HepG2 (cell line): ENCODE measurements at regions of chr16 and their contacts with region 1.

Region 1: GRCh38 chr16:70725912-70726828 is 40.3 kb upstream of the MTSS2 start:
- DNase-seq: no peak
- ATAC-seq: no peak
- H3K4me3 ChIP-seq: peak overlapping the region; percentile 27 to 73 (median 52); a peak in 5 of 6 replicates
- H3K27ac ChIP-seq: peak overlapping the region; percentile 99
- H3K4me1 ChIP-seq: peaks cover 45% of the 10 kb centered on the region
- H3K27me3 ChIP-seq: no peaks in the 10 kb centered on the region
- CTCF ChIP-seq: no peak
- EP300 ChIP-seq: no peak
- POLR2A ChIP-seq: 0 out of 4 replicates have a peak, but pooled peaks of 1 of the 2 experiments have one; percentile 5
- RAD21 ChIP-seq: no peak

Region 2: GRCh38 chr16:70594576-70594975 is 131.6 kb before region 1 on chr16:
- CTCF ChIA-PET with region 1: no interaction called
- POLR2A ChIA-PET with region 1: no interaction called
- in situ Hi-C with region 1: no loop called
- intact Hi-C with region 1: no loop called
- DNase-seq: no peak
- ATAC-seq: no peak
- H3K4me3 ChIP-seq: no peak overlapping the region
- H3K27ac ChIP-seq: no peak overlapping the region
- H3K4me1 ChIP-seq: peaks cover 28% of the 10 kb centered on the region
- H3K27me3 ChIP-seq: peaks cover 0 to 2% of the 10 kb centered on the region in 2 experiments; a peak in 2 of 5 replicates
- CTCF ChIP-seq: no peak
- EP300 ChIP-seq: no peak
- POLR2A ChIP-seq: no peak
- RAD21 ChIP-seq: no peak

Region 3: DNA sequence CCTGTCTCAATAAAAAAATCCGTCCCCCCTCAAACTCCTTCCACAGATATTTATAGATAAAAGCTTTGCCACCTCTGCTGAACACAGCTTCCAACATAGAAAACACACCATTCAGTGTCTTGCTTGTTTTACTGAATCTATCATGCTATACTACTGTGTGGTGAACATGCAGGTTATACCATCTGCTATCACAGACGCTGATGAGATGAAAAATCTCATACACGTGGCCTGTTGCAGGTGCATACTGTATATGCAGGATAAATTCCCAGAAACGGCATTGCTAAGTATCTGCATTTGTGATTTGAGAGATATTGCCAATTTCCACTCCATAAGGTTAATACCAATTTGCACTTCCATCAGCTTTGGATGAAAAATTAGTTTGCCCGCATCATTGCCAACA is 110.2 kb before region 1 on chr16:
- CTCF ChIA-PET with region 1: no interaction called
- POLR2A ChIA-PET with region 1: no interaction called
- in situ Hi-C with region 1: no loop called
- intact Hi-C with region 1: no loop called
- DNase-seq: no peak
- ATAC-seq: no peak
- H3K4me3 ChIP-seq: no peak overlapping the region
- H3K27ac ChIP-seq: no peak overlapping the region
- H3K4me1 ChIP-seq: peaks cover 2% of the 10 kb centered on the region; the same call in 1 of the 2 replicates
- H3K27me3 ChIP-seq: peaks cover 0 to 14% of the 10 kb centered on the region in 2 experiments; a peak in 2 of 5 replicates
- CTCF ChIP-seq: no peak
- EP300 ChIP-seq: no peak
- POLR2A ChIP-seq: no peak
- RAD21 ChIP-seq: no peak

Region 4: DNA sequence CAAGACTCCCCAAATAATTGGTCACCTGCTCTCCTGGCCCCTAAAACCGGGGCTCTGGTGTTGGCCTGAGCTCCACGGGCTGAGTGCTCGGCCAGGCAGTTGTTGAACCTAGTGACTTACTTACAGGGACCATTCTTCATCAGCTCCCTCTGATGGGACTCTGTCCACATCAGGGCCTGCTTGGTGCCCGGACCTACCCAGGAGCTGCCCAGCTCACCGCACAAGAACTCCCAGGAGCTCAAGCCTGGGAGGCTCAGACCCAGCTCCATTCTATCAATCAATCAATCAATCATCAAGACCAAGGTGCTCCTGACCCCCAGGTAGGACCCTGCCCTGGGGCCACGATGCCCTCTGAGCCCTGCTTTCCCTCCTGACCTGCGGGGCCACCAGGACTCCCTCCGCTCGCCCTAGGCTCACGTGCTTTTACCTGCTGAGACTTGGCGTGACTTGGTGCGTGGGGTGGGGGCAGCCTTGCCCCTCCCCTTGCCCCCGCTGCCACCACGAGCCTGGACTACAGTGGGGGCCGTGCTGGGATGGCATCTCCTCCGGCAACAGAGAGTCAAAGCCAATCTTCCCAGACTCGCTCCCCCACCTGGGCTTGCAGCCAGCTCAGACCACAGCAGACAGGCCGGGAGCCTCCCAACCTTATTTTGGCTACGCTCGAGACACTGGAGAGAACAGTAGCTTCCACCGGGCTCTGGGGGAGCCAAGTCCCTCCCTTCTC is 64.1 kb before region 1 on chr16:
- CTCF ChIA-PET with region 1: no interaction called
- POLR2A ChIA-PET with region 1: interaction called, 15 read pairs
- in situ Hi-C with region 1: no loop called
- intact Hi-C with region 1: no loop called
- DNase-seq: no peak
- ATAC-seq: peak; percentile 1; the same call in 1 of the 3 replicates
- H3K4me3 ChIP-seq: no peak overlapping the region
- H3K27ac ChIP-seq: peak overlapping the region; percentile 19
- H3K4me1 ChIP-seq: peaks cover 20% of the 10 kb centered on the region
- H3K27me3 ChIP-seq: 0 out of 5 replicates have a peak, but pooled peaks cover 0 to under 1% of the 10 kb centered on the region in 2 experiments
- CTCF ChIP-seq: no peak
- EP300 ChIP-seq: no peak
- POLR2A ChIP-seq: peak; percentile 27 to 59; a peak in 2 of 4 replicates
- RAD21 ChIP-seq: no peak

Region 5: GRCh38 chr16:70691223-70692129 is 34.7 kb before region 1 on chr16:
- CTCF ChIA-PET with region 1: no interaction called
- POLR2A ChIA-PET with region 1: interaction called, 536 read pairs
- in situ Hi-C with region 1: loop called (anchors 5 kb)
- intact Hi-C with region 1: no loop called
- DNase-seq: peak; percentile 48
- ATAC-seq: no peak
- H3K4me3 ChIP-seq: no peak overlapping the region; a peak in 1 of 6 replicates
- H3K27ac ChIP-seq: peak overlapping the region; percentile 41
- H3K4me1 ChIP-seq: peaks cover 88% of the 10 kb centered on the region
- H3K27me3 ChIP-seq: no peaks in the 10 kb centered on the region
- CTCF ChIP-seq: peak; percentile 39; the same call in 1 of the 2 replicates
- EP300 ChIP-seq: no peak
- POLR2A ChIP-seq: no peak
- RAD21 ChIP-seq: no peak

Region 6: DNA sequence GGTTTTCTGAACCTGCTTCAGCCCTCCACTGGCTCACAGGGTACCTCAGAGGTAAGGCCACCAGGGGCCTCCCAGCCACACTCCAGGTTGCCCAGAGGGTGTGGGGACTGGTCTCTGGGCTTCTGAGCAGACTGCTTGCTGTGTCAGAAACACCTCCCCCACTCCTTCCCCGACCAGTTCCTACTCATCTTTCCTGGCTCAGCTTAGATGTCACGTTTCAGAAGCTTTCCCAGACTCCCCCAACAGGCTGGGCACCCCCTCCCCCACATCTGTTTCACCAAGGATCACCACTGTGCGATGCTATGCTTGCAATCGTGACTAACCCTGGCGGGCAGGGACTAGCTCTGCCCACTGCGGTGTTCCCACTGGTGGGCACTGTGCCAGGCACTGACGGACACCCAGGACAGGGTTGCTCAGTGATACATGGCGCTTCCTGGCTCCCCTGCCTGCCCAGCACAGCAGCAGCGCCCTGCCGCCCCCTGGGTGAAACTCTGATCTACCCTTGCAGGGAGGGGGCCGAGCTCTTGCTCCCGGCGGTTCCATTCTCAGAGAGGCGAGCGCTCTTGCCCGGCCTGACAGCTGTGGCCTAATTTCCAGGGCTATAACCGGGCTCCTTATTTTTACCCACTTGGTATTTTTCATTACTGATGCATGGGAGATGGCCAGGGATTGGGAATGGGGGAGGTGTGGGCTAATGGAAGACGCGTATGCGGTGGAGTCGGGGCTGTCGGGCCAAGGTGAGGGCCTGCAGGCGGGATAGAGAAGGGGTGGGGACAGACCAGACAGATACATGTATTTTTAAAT is 10.9 kb before region 1 on chr16:
- CTCF ChIA-PET with region 1: no interaction called
- POLR2A ChIA-PET with region 1: interaction called, 125 read pairs
- in situ Hi-C with region 1: no loop called
- intact Hi-C with region 1: loop called (anchors 1 kb)
- DNase-seq: no peak
- ATAC-seq: no peak
- H3K4me3 ChIP-seq: no peak overlapping the region
- H3K27ac ChIP-seq: no peak overlapping the region
- H3K4me1 ChIP-seq: peaks cover 64% of the 10 kb centered on the region
- H3K27me3 ChIP-seq: no peaks in the 10 kb centered on the region
- CTCF ChIP-seq: no peak
- EP300 ChIP-seq: no peak
- POLR2A ChIP-seq: no peak
- RAD21 ChIP-seq: no peak

Region 7: GRCh38 chr16:70759666-70760065 is 33.5 kb after region 1 on chr16:
- CTCF ChIA-PET with region 1: no interaction called
- POLR2A ChIA-PET with region 1: interaction called, 31 read pairs
- in situ Hi-C with region 1: no loop called
- intact Hi-C with region 1: no loop called
- DNase-seq: no peak
- ATAC-seq: no peak
- H3K4me3 ChIP-seq: no peak overlapping the region
- H3K27ac ChIP-seq: peak overlapping the region; percentile 50
- H3K4me1 ChIP-seq: peaks cover 28% of the 10 kb centered on the region
- H3K27me3 ChIP-seq: no peaks in the 10 kb centered on the region
- CTCF ChIP-seq: 0 out of 2 replicates have a peak, but pooled peaks have one; percentile 15
- EP300 ChIP-seq: no peak
- POLR2A ChIP-seq: no peak
- RAD21 ChIP-seq: no peak